Dorsolateral prefrontal cortex (tissue), 120 donors: ENCODE measurements at regions of chr2 and their contacts with region 1.

Region 1: GRCh38 chr2:181715033-181715630 is 34.8 kb upstream of the NEUROD1 start:
- DNase-seq: peak in 6 of 10 donors; percentile 56 to 86 (median 66)
- H3K4me3 ChIP-seq: no peak overlapping the region
- H3K27ac ChIP-seq: no peak overlapping the region
- H3K27me3 ChIP-seq: peaks cover 0 to 5% (median 0%) of the 10 kb centered on the region in 45 donors
- CTCF ChIP-seq: peak; percentile 31 to 93 (median 80)

Region 2: DNA sequence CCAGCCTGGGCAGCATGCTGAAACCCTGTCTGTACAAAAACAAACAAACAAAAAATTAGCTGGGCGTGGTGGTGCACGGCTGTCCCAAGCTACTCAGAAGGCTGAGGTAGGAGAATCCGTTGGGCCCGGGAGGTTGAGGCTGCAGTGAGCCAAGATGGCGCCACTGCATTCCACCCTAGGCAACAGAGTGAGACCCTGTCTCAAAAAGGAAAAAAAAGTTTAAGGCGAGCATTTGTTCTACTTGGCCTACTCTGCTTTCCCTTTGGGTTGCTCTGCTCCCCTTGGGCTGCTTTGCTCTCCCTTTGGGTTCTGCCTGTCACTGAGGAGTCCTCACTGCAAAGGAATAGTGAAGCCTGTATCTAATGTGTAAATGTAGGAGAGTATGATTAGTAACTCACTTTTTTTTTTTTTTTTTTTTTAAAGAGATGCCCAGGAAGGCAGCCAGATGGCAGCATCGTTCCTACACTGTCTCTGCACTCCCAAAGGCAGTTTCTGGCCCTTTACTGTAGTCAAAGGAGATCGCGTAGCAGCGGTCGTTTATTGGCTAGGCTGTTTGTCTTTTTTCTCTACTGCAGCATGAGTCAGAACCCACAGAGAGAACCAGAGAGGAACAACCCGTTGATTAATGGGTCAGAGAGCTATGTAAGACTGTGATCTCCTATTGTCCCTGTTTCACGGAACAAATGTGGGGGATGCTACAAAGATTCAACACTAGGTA is 1589.7 kb before region 1 on chr2:
- intact Hi-C with region 1: loop called (anchors 5 kb)
- DNase-seq: peak; percentile 21 to 80 (median 58)
- H3K4me3 ChIP-seq: peak overlapping the region in 36 of 59 donors; percentile 1 to 47 (median 28)
- H3K27ac ChIP-seq: peak overlapping the region in 9 of 59 donors; percentile 16 to 63 (median 38)
- H3K27me3 ChIP-seq: peaks cover 0 to 6% (median 0%) of the 10 kb centered on the region in 45 donors
- CTCF ChIP-seq: peak; percentile 48 to 86 (median 72)

Region 3: DNA sequence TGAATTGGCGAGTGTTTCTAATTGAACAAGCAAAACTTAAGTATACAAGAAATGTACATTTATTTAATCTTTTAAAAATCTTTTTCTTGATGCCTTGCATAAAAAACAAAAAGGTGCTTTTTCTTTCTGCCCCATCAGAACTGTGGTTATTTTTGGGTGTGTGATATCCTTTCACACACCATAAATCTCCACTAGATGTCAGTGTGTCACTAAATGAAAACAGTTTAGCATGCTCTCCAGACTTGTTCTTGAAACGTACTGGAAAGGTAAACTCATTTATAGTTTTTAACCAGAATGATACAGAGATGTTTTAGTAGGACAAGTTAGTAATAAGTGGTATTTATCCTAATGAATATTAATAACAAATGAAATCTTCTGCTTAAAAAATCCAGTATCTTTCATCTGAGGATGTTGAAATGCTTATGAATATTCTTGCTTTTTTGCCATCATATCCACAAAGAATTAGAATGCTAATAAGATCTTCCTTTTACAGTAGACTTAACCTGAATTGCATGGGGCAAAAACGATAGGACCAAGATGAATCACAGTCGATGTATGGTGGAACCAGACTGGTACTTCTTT is 637.9 kb before region 1 on chr2:
- intact Hi-C with region 1: loop called in 1 of 2 experiments (anchors 10 kb)
- DNase-seq: no peak
- H3K4me3 ChIP-seq: no peak overlapping the region
- H3K27ac ChIP-seq: no peak overlapping the region
- H3K27me3 ChIP-seq: no peaks in the 10 kb centered on the region
- CTCF ChIP-seq: peak; percentile 49 to 83 (median 71)

Region 4: DNA sequence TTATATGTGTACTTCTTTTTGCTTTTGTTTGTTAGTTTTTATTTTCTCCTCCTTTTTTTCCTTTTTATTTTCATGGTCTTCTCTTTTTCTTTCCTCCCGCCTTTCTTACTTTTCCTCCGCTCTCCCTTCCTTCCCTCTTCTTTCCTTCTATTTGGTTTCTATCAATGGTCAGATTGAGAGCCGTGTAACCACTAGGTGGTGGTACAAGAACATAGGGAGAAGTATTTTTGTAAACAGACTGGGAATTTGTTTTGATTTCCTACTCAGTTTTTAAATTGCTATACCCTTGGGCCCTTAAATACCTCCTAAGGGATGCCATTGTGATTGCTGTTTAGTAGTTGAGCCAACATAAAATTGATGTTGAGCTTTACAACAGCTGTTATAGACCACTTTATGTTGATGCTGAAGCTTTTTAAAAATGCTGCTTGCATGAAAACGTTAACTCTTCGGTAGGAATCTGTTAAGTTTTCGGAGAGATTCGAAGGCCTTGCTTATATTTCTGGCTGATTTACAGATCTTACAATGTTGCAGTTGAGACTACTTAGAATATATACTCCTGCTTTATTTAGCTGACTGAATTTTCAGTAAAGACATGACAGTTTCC is 610.5 kb before region 1 on chr2:
- intact Hi-C with region 1: loop called (anchors 5 to 10 kb)
- DNase-seq: peak in 1 of 10 donors; percentile 5
- H3K4me3 ChIP-seq: no peak overlapping the region
- H3K27ac ChIP-seq: peak overlapping the region in 1 of 59 donors; percentile 25
- H3K27me3 ChIP-seq: no peaks in the 10 kb centered on the region
- CTCF ChIP-seq: peak; percentile 33 to 83 (median 66)

Region 5: GRCh38 chr2:181466661-181467576 is 248.2 kb before region 1 on chr2:
- intact Hi-C with region 1: loop called in 1 of 2 experiments (anchors 10 kb)
- DNase-seq: peak in 9 of 10 donors; percentile 24 to 72 (median 53)
- H3K4me3 ChIP-seq: no peak overlapping the region
- H3K27ac ChIP-seq: no peak overlapping the region
- H3K27me3 ChIP-seq: peaks cover 0 to 8% (median 0%) of the 10 kb centered on the region in 45 donors
- CTCF ChIP-seq: peak; percentile 56 to 86 (median 76)

Region 6: GRCh38 chr2:181573140-181573736 is 141.9 kb before region 1 on chr2:
- intact Hi-C with region 1: loop called in 1 of 2 experiments (anchors 5 kb)
- DNase-seq: peak in 1 of 10 donors; percentile 26
- H3K4me3 ChIP-seq: no peak overlapping the region
- H3K27ac ChIP-seq: peak overlapping the region in 1 of 59 donors; percentile 1
- H3K27me3 ChIP-seq: peaks cover 0 to 5% (median 0%) of the 10 kb centered on the region in 45 donors
- CTCF ChIP-seq: peak in 48 of 56 donors; percentile 10 to 69 (median 38)

Region 7: DNA sequence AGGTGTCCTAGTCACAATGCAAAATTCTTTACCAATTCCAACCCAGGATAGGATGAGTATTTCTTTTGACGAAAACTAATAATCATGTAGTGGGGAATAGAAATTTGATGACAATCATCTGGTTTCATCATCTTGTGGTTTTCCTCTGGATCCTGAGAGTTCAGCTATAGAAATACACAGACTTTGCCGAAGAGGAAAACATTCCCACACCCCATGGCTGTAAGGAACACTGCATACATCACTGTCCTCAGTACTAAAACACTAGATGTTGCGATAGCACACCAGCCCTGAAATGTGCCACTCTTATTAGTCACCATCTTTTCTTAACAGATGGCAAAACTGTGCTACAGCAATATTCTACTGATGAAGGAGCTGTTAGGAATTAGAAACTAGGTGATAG is 87.6 kb before region 1 on chr2:
- intact Hi-C with region 1: no loop called
- DNase-seq: no peak
- H3K4me3 ChIP-seq: no peak overlapping the region
- H3K27ac ChIP-seq: peak overlapping the region in 1 of 59 donors; percentile 6
- H3K27me3 ChIP-seq: peaks cover 0 to 23% (median 0%) of the 10 kb centered on the region in 45 donors
- CTCF ChIP-seq: no peak